Transverse colon (tissue), 4 donors: ENCODE measurements at regions of chr11 and their contacts with region 1.

Region 1: DNA sequence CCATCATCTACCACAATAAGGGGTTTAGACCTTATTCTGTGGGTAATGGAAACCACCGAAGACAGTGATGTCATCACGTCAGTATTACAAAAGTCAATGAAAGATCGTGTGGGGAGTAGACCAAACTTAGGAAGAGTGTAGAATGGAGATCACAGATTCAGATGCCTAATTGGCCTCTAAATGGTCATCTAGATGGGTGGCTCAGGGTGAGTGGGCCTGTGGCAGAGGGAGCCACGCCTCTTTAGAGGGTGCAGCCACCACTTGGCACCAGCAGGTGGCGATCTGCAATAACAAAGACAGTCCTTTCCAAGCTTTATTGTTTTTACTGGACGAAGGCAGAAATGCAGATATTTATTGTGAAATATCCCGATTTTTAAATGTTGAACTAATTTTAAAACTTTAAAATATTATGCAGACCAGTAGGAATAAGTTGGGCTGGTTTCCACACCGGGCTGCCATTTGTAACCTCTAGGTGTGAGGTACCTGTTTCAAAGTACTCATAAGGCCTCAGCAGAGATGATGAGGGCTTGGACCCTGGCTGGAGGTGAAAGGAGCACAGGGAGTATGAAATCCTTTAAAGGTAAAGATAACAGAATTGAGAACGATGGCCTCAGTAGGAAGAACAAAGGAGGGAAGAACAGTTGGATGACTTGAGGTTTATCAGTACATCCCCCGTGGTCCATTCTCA is 222.0 kb downstream of the DBX1 start:
- DNase-seq: peak; percentile 49
- H3K4me3 ChIP-seq: no peak overlapping the region
- H3K27ac ChIP-seq: no peak overlapping the region
- H3K4me1 ChIP-seq: peaks cover 0 to 2% (median 0%) of the 10 kb centered on the region in 4 donors
- H3K27me3 ChIP-seq: no peaks in the 10 kb centered on the region
- CTCF ChIP-seq: peak; percentile 52 to 80 (median 75)
- EP300 ChIP-seq: no peak
- POLR2A ChIP-seq: no peak

Region 2: DNA sequence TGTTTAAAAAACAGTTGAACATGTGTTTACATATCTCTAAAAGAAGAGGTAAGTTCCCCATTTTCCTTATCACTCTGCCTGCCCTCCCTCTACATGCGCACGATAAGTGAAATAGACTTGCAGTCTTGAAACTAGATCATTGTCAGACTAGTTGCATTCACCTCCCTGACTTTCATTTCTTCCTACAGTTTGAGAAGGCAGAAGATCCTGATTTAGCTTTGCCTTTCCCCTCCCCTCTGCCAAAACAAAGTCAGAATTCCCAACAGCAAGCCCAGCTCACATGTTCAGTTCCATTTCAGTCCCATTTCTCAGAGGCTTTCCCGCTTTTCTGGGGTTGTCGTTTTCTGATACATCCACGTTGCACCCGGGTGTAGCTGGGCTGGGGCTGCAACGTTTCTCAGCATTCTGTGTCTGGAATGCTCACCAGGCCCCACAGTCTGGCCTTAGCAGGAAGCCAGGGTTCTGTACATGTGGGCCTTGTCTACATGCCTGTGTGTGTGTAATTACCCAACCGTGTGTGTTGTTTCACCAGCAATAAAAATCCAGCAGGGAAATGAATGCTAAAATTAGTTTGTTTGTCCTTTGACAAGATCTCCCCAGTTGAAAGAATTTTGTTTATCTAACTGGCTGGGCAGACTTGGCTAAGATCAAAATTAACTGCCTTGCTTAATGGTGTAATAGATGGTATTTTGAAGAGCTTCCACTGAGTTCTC is 42.8 kb after region 1 on chr11:
- in situ Hi-C with region 1: no loop called
- intact Hi-C with region 1: loop called (anchors 5 kb)
- DNase-seq: peak; percentile 17
- H3K4me3 ChIP-seq: no peak overlapping the region
- H3K27ac ChIP-seq: peak overlapping the region; percentile 17 to 69 (median 60)
- H3K4me1 ChIP-seq: peaks cover 8 to 32% (median 20%) of the 10 kb centered on the region in 4 donors
- H3K27me3 ChIP-seq: no peaks in the 10 kb centered on the region
- CTCF ChIP-seq: no peak
- EP300 ChIP-seq: no peak
- POLR2A ChIP-seq: no peak

Region 3: GRCh38 chr11:20337526-20338154 is 399.3 kb after region 1 on chr11:
- in situ Hi-C with region 1: loop called in 1 of 4 experiments (anchors 25 kb)
- intact Hi-C with region 1: no loop called
- DNase-seq: peak; percentile 13
- H3K4me3 ChIP-seq: no peak overlapping the region
- H3K27ac ChIP-seq: no peak overlapping the region
- H3K4me1 ChIP-seq: no peaks in the 10 kb centered on the region
- H3K27me3 ChIP-seq: peaks cover 18% of the 10 kb centered on the region
- CTCF ChIP-seq: peak in 3 of 5 experiments; percentile 26 to 29 (median 27)
- EP300 ChIP-seq: no peak
- POLR2A ChIP-seq: no peak

Region 4: DNA sequence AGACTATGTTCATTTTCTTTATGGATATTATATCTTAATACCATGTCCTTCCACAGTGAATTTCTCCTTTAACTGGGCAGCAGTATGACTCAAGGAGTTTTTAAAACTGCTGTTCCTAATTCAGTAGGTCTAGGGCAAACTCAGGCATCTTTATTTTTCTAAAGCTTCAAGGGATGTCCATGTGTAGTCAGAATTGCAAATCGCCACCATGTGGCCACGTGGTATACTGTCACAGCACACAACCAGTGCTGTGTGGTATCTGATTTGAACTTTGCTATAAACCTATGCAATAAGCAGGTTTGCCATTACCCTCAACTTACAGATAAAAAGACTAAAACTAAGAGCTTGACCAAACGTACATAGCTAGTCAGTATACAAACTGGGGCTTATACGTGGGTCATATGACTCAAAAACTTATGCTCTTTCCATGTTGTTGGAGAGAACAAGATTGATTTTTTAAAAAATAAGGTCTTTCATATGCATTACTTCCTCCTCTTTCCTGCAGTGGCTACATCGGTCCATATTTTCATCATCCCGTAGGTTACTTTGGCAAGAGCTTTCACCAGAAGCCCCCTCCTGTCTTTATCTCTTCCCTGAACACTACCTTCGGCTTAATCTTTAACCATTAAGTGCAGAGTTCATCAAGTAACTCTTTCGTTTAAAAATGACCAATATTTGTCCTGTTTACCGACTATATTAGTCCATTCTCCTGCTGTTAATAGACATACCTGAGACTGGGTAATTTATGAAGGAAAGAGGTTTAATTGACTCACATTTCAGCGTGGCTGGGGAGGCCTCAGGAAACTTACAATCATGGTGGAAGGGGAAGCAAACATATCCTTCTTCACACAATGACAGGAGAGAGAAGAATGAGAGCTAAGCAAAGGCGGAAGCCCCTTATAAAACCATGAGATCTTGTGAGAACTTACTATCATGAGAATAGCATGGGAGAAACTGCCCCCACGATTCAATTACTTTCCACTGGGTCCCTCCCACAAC is 417.2 kb after region 1 on chr11:
- in situ Hi-C with region 1: loop called in 1 of 4 experiments (anchors 25 kb)
- intact Hi-C with region 1: no loop called
- DNase-seq: peak; percentile 51
- H3K4me3 ChIP-seq: no peak overlapping the region
- H3K27ac ChIP-seq: no peak overlapping the region
- H3K4me1 ChIP-seq: peaks cover 0 to 24% (median 9%) of the 10 kb centered on the region in 4 donors
- H3K27me3 ChIP-seq: no peaks in the 10 kb centered on the region
- CTCF ChIP-seq: peak; percentile 51 to 55 (median 55)
- EP300 ChIP-seq: no peak
- POLR2A ChIP-seq: no peak